WTC11 (cell line): ENCODE measurements at regions of chr10 and their contacts with region 1.

Region 1: DNA sequence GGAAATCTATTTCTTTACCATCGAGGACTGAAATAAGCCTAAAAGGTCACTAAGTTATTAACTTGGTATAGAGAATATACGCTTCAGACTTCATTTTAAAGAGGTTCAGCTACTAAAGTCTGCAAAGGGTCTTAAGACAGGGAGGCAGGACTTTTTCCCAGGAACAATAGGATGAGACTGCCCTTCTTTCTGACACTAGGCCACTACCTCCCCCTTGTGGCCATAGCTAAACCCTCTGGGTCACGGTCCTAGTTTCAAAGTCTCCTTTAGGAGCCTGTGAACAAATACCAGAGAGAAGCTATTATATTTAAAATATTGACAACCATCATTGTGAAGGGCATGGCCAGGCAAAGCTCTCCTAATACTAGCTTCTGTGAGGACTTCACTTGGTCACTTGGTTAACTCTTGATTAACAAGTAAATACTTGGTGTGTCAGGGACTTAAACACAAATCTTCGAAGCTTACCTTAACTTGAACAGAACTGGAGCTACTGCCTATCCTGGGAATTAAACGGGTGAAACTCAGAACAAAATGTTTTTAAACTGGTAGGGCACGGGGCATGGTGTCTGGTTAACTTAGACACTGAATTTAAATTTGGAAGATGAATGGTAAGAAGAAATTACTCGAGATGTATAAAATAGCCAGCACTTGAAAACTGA is 75.6 kb downstream of the CCDC6 start:
- DNase-seq: peak; percentile 70
- ATAC-seq: peak; percentile 87
- H3K4me3 Mint-ChIP-seq: no peak overlapping the region
- H3K27ac Mint-ChIP-seq: peak overlapping the region; percentile 22; the same call in 1 of the 2 replicates
- H3K4me1 Mint-ChIP-seq: peaks cover 24% of the 10 kb centered on the region
- H3K27me3 Mint-ChIP-seq: no peaks in the 10 kb centered on the region
- CTCF ChIP-seq: peak; percentile 72

Region 2: DNA sequence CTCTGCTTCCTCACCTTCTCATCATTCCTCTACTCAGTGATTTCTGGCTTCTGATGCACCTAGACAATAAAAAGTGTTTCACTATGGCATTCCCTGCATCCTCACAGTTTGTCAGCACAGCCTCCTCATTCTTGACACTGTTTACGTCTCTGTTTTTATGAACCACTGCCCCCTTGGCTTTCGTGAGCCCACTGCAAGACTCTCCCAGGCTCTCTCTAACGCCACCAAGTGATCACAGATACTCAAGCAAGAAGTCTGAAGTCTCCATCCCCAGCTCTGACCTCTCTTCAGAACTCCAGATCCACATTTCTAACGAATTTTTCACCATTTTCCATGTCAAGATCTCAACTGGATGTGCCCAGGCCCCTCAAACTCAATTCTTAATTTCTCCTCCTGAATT is 130.0 kb before region 1 on chr10:
- CTCF ChIA-PET with region 1: interaction called, 11 read pairs
- POLR2A ChIA-PET with region 1: no interaction called
- DNase-seq: peak; percentile 23
- ATAC-seq: peak; percentile 99
- H3K4me3 Mint-ChIP-seq: no peak overlapping the region
- H3K27ac Mint-ChIP-seq: no peak overlapping the region
- H3K4me1 Mint-ChIP-seq: peaks cover 9% of the 10 kb centered on the region
- H3K27me3 Mint-ChIP-seq: no peaks in the 10 kb centered on the region
- CTCF ChIP-seq: no peak

Region 3: DNA sequence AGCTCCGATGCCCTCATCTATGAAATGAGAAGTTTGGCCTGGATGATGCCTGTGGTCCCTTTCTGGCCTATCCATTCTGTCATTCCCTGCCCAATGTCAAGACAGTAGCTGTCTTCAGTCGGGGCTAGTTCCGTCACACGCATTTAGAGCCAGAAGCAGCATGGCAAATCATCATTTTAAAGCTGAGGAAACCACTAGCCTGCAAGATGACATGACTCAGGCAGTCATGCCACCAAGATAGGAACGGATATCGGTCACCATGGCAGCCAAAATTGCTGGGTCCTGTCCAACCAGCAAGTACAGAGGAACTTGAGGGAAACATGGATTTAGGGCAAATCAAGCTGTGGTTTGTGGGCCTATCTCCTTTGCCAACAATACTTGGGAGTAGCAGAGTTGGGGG is 13.0 kb before region 1 on chr10:
- CTCF ChIA-PET with region 1: interaction called, 30 read pairs
- POLR2A ChIA-PET with region 1: no interaction called
- DNase-seq: no peak
- ATAC-seq: no peak
- H3K4me3 Mint-ChIP-seq: no peak overlapping the region
- H3K27ac Mint-ChIP-seq: no peak overlapping the region
- H3K4me1 Mint-ChIP-seq: peaks cover 29% of the 10 kb centered on the region
- H3K27me3 Mint-ChIP-seq: no peaks in the 10 kb centered on the region
- CTCF ChIP-seq: no peak

Region 4: DNA sequence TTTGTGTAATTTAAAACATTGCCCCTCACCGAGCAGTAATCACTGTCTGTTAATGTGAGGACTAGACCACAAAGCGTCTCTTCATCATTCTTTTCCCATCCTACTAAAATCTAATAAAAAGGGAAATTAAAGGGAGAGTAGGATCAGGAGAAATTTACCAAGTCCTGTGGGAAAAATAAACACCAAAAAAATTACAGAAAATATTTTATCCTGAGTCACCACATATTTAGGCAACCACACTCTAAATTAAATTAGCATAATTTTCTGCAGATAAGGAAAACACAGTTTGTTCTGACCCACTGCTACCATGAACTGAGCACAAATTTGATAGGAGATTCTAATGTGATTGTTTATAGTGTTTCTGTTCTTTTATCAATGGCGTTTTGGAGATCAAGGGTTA is 26.3 kb after region 1 on chr10:
- CTCF ChIA-PET with region 1: interaction called, 14 read pairs
- POLR2A ChIA-PET with region 1: no interaction called
- DNase-seq: no peak
- ATAC-seq: no peak
- H3K4me3 Mint-ChIP-seq: no peak overlapping the region
- H3K27ac Mint-ChIP-seq: no peak overlapping the region
- H3K4me1 Mint-ChIP-seq: peaks cover 72% of the 10 kb centered on the region
- H3K27me3 Mint-ChIP-seq: no peaks in the 10 kb centered on the region
- CTCF ChIP-seq: no peak

Region 5: GRCh38 chr10:59906417-59907202 is 75.9 kb after region 1 on chr10 and contains the start of gene CCDC6:
- CTCF ChIA-PET with region 1: interaction called, 28 read pairs
- POLR2A ChIA-PET with region 1: interaction called, 8 read pairs
- DNase-seq: peak; percentile 93
- ATAC-seq: peak; percentile 82
- H3K4me3 Mint-ChIP-seq: peak within 1 kb of the TSS; percentile 98
- H3K27ac Mint-ChIP-seq: peak within 1 kb of the TSS; percentile 100
- H3K4me1 Mint-ChIP-seq: peaks cover 57% of the 10 kb centered on the region
- H3K27me3 Mint-ChIP-seq: no peaks in the 10 kb centered on the region
- CTCF ChIP-seq: no peak; the same call in 1 of the 2 replicates
- total RNA-seq, gene CCDC6: 48.4 to 55.2 TPM (median 49.8 TPM) in 3 replicates